GM12878 (cell line): ENCODE measurements at regions of chr10 and their contacts with region 1.

Region 1: GRCh38 chr10:71359364-71360046 is 37.2 kb upstream of the CDH23 start:
- DNase-seq: no peak
- ATAC-seq: peak; percentile 71
- H3K4me3 ChIP-seq: no peak overlapping the region
- H3K27ac ChIP-seq: peak overlapping the region; percentile 24; the same call in 1 of the 2 replicates
- H3K4me1 ChIP-seq: peaks cover 26% of the 10 kb centered on the region
- H3K27me3 ChIP-seq: no peaks in the 10 kb centered on the region
- CTCF ChIP-seq: no peak
- EP300 ChIP-seq: no peak
- POLR2A ChIP-seq: no peak
- RAD21 ChIP-seq: no peak

Region 2: GRCh38 chr10:71371750-71372166 is 12.3 kb after region 1 on chr10:
- CTCF ChIA-PET with region 1: interaction called, 11 read pairs
- POLR2A ChIA-PET with region 1: interaction called, 4 read pairs
- RAD21 ChIA-PET with region 1: interaction called, 5 read pairs
- SMC1A ChIA-PET with region 1: interaction called, 12 read pairs
- in situ Hi-C with region 1: no loop called
- intact Hi-C with region 1: no loop called
- DNase-seq: peak; percentile 56
- ATAC-seq: peak; percentile 65
- H3K4me3 ChIP-seq: no peak overlapping the region
- H3K27ac ChIP-seq: peak overlapping the region; percentile 93
- H3K4me1 ChIP-seq: peaks cover 58% of the 10 kb centered on the region
- H3K27me3 ChIP-seq: no peaks in the 10 kb centered on the region
- CTCF ChIP-seq: no peak
- EP300 ChIP-seq: no peak; a peak in 1 of 4 replicates
- POLR2A ChIP-seq: no peak
- RAD21 ChIP-seq: no peak

Region 3: DNA sequence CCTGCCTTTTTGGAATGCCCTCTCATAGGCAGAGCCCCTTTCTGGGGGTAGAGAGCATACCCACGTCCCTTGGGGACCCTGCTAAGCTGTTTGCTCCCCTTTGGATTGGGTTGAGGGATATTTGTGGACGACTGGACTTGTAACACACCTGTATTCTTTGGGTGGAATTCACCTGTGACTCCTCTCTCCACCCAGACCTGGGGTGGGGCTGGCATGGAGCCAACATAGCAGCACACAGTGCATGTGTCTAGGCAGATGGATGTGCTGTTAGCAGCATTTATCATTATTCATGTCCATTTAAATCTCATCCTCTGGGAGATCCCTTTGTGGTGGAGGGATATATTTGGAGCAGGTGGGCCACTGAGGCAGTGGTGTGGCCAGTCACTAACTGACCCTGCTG is 88.2 kb after region 1 on chr10:
- CTCF ChIA-PET with region 1: no interaction called
- POLR2A ChIA-PET with region 1: no interaction called
- RAD21 ChIA-PET with region 1: no interaction called
- SMC1A ChIA-PET with region 1: no interaction called
- in situ Hi-C with region 1: no loop called
- intact Hi-C with region 1: no loop called
- DNase-seq: no peak
- ATAC-seq: no peak
- H3K4me3 ChIP-seq: no peak overlapping the region
- H3K27ac ChIP-seq: no peak overlapping the region
- H3K4me1 ChIP-seq: no peaks in the 10 kb centered on the region
- H3K27me3 ChIP-seq: peaks cover 0 to 2% of the 10 kb centered on the region in 2 experiments; a peak in 2 of 4 replicates
- CTCF ChIP-seq: no peak
- EP300 ChIP-seq: no peak
- POLR2A ChIP-seq: no peak
- RAD21 ChIP-seq: no peak